Right ventricle myocardium superior (tissue), 1 donor: ENCODE measurements at regions of chr16 and their contacts with region 1.

Region 1: GRCh38 chr16:3059000-3059722 is 6.3 kb upstream of the IL32 start:
- DNase-seq: peak; percentile 94
- ATAC-seq: peak; percentile 99

Region 2: GRCh38 chr16:3112058-3112880 is 53.1 kb after region 1 on chr16 and contains the start of gene ZNF205:
- intact Hi-C with region 1: loop called (anchors 5 kb)
- DNase-seq: peak; percentile 83
- ATAC-seq: peak; percentile 96
- total RNA-seq, gene ZNF205: 6.9 TPM

Region 3: DNA sequence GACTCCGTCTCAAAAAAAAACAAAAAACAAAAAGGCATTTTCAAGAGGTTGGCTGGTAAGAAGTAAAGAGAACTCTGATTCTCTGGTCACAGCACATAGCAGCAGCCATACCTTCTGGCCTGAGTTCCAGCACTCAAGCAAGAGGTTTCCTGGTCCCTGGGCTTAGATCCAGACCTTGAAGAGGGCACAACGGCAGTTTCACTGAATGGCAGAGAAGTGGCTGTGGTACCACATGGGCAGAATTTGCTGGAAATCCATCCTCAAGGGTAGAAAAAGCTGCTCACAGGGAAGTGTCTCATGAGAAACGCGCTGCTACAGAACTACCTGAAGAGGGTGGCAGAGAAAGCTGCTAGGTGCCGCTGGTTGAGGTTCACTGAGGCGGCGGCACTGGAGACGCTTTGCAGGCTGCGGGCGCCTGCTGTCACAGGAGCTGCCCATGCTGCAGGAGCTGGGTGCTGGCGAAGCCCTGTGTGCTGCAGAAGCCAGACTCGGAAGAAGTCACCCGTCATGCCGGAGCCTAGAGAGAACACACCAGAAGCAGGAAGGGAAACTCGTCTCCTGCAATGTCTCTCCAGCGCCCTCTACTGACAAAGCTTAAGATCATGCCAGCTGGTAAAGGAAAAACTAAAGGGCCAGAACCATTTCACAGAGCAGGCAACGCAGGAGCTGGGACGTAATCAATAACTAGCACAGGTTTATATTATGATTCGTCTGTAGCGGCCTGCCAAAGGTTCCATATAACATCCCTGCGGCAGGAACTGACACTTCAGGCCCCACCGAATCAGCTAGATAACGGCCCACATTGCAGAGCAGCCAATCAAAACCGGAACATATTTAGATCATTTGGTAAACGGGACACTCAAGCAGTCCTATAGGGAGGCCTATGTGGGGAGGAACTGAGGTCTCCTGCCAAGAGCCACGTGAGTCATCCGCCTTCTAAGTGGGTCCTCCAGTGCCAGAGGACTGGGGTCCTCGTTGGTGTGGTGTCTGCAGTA is 70.3 kb after region 1 on chr16:
- intact Hi-C with region 1: loop called (anchors 5 kb)
- DNase-seq: peak; percentile 74
- ATAC-seq: peak; percentile 84

Region 4: GRCh38 chr16:3161136-3162018 is 102.2 kb after region 1 on chr16:
- intact Hi-C with region 1: loop called (anchors 10 kb)
- DNase-seq: no peak
- ATAC-seq: no peak